Heart right ventricle (tissue), 16 donors: ENCODE measurements at regions of chr14 and their contacts with region 1.

Region 1: DNA sequence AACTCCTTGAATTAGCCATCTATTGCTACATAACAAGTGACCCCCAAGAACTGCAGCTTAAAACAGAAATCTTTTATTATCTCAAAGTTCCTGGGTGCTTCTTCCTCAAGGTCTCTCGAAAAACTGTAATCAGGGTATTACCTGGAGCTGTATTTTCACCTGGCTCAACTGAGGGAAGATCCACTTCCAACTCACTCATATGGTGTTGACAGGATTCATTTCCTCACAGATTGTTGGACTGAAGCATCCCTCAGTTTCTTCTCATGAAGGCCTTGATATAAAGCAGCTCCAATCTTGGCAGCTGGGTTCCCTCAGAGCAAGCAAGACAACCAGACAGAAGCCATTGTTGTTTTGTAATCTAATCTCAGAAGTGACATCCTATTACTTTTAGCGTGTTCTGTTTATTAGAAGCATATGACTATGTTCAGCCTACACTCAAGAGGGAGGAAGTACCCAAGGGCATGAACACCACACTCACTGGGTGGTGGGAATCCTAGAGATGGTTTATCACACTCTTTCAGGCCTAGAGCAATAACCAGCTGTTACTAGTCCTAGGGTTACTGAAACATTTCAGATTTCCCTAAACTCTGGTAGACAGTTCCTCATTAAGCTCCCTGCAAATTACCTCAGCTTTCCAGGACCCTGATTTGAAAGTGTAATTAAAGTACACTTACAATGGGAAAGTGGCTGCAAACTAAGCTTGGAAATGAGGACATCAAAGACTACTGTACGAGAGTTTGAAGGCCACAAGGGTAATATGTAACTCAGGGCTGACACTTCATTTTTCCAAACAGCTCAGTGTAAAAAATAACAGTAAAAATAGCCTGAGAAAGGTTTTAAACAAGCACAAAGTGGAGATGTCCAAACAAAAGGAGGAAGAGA is 222.2 kb downstream of the SEC23A start:
- DNase-seq: no peak
- ATAC-seq: no peak
- H3K4me3 ChIP-seq: no peak overlapping the region
- H3K27ac ChIP-seq: peak overlapping the region in 5 of 10 donors; percentile 10 to 60 (median 32)
- H3K4me1 ChIP-seq: peaks cover 0 to 38% (median 5%) of the 10 kb centered on the region in 9 donors
- H3K27me3 ChIP-seq: no peaks in the 10 kb centered on the region
- CTCF ChIP-seq: no peak

Region 2: DNA sequence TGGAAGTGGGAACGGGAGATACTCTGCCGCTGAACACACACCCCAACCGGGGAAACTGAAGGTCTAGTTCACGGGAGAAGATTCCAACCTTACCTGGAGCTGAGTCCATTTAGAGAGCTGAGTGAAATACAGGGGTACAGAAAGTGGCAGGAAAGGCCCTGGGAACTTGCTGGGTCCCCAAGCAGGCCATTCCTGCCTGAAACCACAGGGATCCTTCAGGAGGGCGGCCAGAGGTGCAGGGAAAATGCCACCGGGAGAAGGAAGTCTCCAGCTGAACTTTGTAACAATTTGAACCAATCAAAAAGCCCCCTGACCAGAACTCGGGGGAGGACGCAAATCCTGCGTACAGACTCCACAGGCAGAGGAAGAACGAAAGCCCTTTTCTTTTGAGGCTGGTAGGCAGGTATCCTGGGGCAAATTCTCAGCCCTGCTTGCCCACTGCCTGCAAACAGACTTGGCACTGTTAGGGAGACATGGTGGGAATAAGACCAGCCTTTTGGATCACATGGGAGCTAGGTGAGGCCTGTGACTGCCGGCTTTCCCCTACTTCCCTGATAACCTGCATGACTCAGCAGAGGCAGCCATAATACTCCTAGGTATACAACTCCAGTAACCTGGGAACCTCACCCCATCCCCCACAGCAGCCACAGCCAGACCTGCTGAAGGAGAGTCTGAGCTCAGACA is 51.2 kb after region 1 on chr14:
- intact Hi-C with region 1: no loop called
- DNase-seq: no peak
- ATAC-seq: no peak
- H3K4me3 ChIP-seq: no peak overlapping the region
- H3K27ac ChIP-seq: no peak overlapping the region
- H3K4me1 ChIP-seq: no peaks in the 10 kb centered on the region
- H3K27me3 ChIP-seq: no peaks in the 10 kb centered on the region
- CTCF ChIP-seq: no peak

Region 3: GRCh38 chr14:38989922-38990546 is 109.2 kb after region 1 on chr14:
- intact Hi-C with region 1: loop called in 4 of 10 experiments (anchors 5 to 10 kb)
- DNase-seq: no peak
- ATAC-seq: peak in 1 of 8 donors; percentile 41
- H3K4me3 ChIP-seq: peak overlapping the region in 2 of 10 donors; percentile 4 to 18
- H3K27ac ChIP-seq: peak overlapping the region in 7 of 10 donors; percentile 7 to 79 (median 51)
- H3K4me1 ChIP-seq: peaks cover 0 to 55% (median 15%) of the 10 kb centered on the region in 9 donors
- H3K27me3 ChIP-seq: no peaks in the 10 kb centered on the region
- CTCF ChIP-seq: no peak